Ascending aorta (tissue), 2 donors: ENCODE measurements at regions of chr20 and their contacts with region 1.

Region 1: DNA sequence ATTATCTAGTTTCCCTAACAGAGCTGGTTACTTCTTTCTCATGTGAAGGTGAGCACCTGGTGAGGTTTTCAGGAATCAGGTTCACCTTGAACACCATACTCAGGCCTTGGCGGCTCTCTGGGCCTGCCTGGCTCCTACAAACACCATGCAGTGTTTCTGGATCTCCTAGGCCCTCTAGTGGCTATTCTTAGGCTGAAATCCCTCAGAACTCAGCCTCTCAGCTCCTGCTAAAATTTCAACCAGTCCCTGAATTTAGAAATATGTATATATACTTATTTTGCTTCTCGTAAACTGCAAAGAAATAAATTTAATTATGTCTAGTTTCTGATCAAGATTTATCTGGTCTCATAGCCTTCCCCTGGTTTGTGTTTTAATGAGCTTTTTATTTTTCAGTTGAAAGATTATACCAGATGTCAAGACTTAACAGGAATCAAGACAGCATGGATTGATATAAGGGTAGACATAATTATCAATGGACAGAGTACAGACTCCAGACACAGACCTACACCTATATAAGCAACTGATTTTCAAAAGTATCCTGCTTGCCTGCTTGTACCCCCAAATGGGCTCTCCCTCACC is 55.9 kb downstream of the ANKEF1 start:
- DNase-seq: no peak
- H3K4me3 ChIP-seq: no peak overlapping the region
- H3K27ac ChIP-seq: no peak overlapping the region
- H3K4me1 ChIP-seq: no peaks in the 10 kb centered on the region
- H3K27me3 ChIP-seq: no peaks in the 10 kb centered on the region
- CTCF ChIP-seq: peak; percentile 44 to 80 (median 44)

Region 2: DNA sequence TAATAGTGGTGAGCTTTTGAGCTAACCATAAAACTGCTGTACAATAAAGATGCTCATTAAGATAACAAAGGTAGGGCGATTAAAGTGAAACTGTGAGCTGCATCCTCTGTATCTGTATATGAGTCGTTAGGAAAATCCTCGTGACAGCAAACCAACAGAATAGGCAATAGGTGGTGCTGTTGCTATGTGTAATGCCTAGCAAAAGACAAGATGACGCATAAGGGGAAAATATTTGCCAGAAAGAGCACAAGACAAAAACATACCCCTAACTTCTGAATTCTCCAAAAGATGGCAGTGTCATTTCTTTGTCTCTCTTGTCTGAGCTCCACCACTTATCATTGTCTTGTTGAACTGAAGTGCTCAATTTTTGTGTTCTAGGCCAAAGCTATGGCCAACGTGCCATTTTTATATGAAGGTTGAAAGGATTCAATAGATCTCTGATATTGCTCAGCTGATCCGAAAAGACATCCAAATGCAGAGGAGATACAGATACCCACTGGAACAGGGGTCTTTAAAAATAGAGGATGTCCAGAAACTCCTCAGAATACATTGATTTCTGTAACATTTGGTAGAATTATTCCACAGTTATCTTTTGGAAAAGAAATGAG is 112.2 kb before region 1 on chr20:
- intact Hi-C with region 1: loop called (anchors 1 kb)
- DNase-seq: peak in 1 of 2 donors; percentile 71
- H3K4me3 ChIP-seq: peak overlapping the region in 1 of 2 donors; percentile 48
- H3K27ac ChIP-seq: peak overlapping the region; percentile 10 to 17
- H3K4me1 ChIP-seq: no peaks in the 10 kb centered on the region
- H3K27me3 ChIP-seq: no peaks in the 10 kb centered on the region
- CTCF ChIP-seq: peak; percentile 72 to 80 (median 79)

Region 3: DNA sequence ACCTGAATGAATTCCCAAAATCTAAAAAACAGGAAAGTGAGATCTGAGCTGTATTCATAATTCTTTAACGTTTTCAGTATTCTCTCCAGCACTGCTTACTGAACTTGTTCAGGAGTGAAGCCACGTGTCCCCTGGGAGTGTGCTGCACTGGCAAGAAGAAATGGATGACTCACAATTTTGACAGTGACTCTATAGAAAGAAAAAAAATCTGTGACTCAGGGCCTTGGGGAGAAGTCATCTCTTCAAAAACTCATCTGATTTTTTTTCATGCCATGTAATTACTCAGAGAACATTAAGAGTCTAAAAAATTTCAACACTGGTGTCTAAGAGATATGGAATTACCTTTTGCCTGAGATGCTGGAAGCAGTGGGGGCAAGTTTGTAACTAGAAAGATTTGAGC is 16.2 kb before region 1 on chr20:
- intact Hi-C with region 1: no loop called
- DNase-seq: no peak
- H3K4me3 ChIP-seq: no peak overlapping the region
- H3K27ac ChIP-seq: no peak overlapping the region
- H3K4me1 ChIP-seq: no peaks in the 10 kb centered on the region
- H3K27me3 ChIP-seq: no peaks in the 10 kb centered on the region
- CTCF ChIP-seq: no peak